PC-9 (cell line): ENCODE measurements at regions of chr5 and their contacts with region 1.

Region 1: DNA sequence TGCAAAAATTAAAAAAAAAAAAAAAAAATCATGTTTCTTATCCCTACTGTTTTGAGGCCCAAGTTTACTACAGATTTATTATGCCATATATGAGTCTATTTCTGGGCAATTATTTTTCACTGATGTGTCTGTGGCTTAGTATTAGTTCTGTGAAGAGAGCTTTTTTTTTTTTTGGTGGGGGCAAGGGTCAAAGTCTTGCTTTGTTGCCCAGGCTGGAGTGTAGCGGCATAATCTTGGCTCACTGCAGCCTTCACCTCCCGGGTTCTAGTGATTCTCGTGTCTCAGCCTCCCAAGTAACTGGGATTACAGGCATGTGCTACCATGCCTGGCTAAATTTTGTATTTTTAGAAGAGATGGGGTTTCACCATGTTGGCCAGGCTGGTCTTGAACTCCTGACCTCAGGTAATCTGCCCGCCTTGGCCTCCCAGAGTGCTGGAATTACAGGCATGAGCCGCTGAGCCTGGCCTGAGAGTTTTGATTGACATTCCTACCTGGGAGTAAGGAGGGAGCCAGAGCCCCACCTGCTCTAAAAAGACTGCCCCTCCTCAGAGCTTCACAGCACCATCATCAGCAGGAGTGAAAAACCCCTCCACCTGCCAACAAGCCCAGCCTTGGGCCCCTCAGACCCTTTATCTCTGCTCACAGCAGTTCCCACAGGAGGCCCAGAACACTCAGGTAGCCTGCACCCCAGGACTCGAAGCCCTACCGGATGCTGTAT is 36.1 kb upstream of the JADE2 start:
- DNase-seq: no peak
- H3K4me3 ChIP-seq: no peak overlapping the region
- H3K27ac ChIP-seq: no peak overlapping the region
- H3K4me1 ChIP-seq: no peaks in the 10 kb centered on the region
- H3K27me3 ChIP-seq: no peaks in the 10 kb centered on the region
- CTCF ChIP-seq: no peak

Region 2: DNA sequence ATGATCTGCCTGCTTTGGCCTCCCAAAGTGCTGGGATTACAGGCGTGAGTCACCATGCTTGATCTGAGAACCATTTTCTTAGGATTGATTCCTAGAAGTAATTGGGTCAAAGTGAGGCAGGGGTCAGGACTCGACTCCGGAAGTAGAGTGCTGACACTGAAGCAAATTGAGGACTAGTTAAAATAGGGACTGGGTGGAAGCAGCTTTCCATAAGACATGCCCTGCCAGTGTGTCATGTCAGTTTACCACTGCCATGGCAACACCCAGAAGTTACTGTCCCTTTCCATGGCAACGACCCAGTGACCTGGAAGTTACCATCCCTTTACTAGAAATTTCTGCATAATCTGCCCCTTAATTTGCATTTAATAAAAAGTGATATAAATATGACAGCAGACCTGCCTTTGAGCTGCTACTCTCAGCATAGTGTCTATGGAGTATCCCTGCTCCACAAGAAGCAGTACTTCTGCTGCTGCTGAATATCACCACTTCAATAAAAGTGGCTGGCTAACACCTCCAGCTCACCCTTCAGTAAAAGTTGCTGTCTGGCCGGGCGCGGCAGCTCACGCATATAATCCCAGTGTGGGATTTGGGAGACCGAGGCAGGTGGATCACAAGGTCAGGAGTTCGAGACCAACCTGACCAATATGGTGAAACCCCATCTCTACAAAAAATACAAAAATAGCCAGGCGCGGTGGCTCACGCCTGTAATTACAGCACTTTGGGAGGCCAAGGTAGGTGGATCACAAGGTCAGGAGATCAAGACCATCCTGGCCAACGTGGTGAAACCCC is 11.7 kb before region 1 on chr5:
- CTCF ChIA-PET with region 1: no interaction called
- POLR2A ChIA-PET with region 1: interaction called, 20 read pairs
- intact Hi-C with region 1: no loop called
- DNase-seq: peak in 1 of 2 experiments; percentile 50
- H3K4me3 ChIP-seq: no peak overlapping the region
- H3K27ac ChIP-seq: no peak overlapping the region
- H3K4me1 ChIP-seq: no peaks in the 10 kb centered on the region; the same call in 1 of the 2 replicates
- H3K27me3 ChIP-seq: no peaks in the 10 kb centered on the region
- CTCF ChIP-seq: no peak

Region 3: DNA sequence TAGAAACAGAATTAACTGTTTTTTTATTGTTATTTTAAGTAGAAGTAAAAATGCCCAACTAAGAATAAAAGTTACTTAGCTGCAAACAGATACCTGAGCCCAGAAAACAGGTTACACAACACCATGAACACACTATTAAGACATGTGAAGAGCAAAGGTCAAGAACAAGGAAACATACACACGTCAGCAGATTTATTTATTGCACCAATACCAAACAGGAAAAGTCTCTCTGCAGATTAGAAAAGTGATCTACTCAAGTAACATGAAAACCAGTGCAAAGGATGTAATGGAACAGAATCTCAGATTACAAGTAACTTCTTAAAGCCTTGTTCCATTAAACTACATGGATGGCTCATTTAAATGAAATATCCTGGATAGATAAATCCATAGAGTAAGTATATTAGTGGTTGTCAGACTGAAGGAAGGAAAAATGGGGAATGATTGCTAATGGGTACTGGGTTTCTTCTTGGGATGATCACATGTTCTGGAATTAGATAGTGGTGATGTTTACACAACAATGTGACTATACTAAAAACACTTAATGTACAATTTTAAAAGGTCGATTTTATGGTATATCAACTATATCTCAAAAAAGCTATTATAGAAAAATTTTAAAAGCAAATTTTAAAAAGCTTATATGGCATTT is 137.1 kb after region 1 on chr5:
- CTCF ChIA-PET with region 1: no interaction called
- POLR2A ChIA-PET with region 1: no interaction called
- intact Hi-C with region 1: no loop called
- DNase-seq: peak in 1 of 2 experiments; percentile 85
- H3K4me3 ChIP-seq: no peak overlapping the region
- H3K27ac ChIP-seq: peak overlapping the region; percentile 57
- H3K4me1 ChIP-seq: peaks cover 16% of the 10 kb centered on the region
- H3K27me3 ChIP-seq: no peaks in the 10 kb centered on the region
- CTCF ChIP-seq: no peak

Region 4: DNA sequence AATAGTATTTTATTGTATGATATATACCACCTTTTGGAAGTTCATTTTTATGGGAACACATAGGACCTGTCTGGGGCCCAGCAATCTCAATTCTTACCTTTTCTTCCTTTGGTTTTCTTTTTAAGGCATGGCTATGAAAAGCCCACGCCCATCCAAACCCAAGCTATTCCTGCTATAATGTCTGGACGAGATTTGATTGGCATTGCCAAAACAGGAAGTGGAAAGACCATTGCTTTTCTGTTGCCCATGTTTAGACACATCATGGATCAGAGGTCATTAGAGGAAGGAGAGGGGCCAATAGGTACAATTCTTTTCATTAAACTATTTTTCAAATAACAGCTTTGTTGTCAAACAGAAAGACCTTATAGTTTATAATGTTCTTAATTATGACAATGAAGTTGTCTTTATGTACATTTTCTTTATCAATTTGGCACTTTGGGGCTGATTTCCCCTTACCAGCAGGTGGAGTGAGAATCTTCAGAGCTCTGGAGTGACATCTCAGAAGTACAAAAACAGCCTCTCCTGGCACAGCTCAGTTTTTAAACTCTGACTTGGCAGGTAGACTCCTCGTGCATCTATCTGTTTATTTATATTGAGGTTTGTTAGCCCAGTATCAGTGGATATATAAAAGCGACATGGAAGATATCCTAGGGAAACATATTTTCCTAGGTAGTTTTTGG is 295.0 kb after region 1 on chr5:
- CTCF ChIA-PET with region 1: no interaction called
- POLR2A ChIA-PET with region 1: no interaction called
- intact Hi-C with region 1: no loop called
- DNase-seq: no peak
- H3K4me3 ChIP-seq: no peak overlapping the region
- H3K27ac ChIP-seq: no peak overlapping the region
- H3K4me1 ChIP-seq: no peaks in the 10 kb centered on the region
- H3K27me3 ChIP-seq: no peaks in the 10 kb centered on the region
- CTCF ChIP-seq: 0 out of 2 replicates have a peak, but pooled peaks have one; percentile 24